Dorsolateral prefrontal cortex (tissue), 120 donors: ENCODE measurements at regions of chr19 and their contacts with region 1.

Region 1: GRCh38 chr19:34733826-34734600 is at the start of gene ZNF181:
- DNase-seq: peak; percentile 82 to 93 (median 90)
- H3K4me3 ChIP-seq: peak within 1 kb of the TSS; percentile 71 to 100 (median 96)
- H3K27ac ChIP-seq: peak within 1 kb of the TSS; percentile 93 to 99 (median 98)
- H3K27me3 ChIP-seq: no peaks in the 10 kb centered on the region
- CTCF ChIP-seq: peak in 30 of 56 donors; percentile 5 to 65 (median 34)
- total RNA-seq, gene ZNF181: 10.3 to 29.8 (median 19.8) TPM

Region 2: DNA sequence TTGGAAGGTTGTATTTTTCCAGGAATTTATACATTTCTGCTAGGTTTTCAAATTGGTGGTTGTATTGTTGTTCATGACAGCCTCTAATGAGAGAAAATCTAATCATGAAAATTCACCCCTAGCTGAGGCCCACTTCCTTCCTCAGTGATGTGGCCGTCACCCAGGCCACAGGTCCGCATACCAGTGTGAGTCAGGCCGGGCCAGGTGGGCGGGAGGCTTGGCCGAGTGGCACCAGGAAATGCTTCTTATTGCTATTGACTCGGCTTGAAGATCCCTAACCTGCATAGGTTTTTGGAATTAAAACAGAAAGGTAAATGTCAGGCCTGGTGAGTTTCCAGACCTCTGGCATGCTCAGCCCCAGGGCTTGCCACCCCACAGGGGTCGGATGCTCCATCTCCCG is 145.8 kb before region 1 on chr19:
- intact Hi-C with region 1: no loop called
- DNase-seq: no peak
- H3K4me3 ChIP-seq: no peak overlapping the region
- H3K27ac ChIP-seq: no peak overlapping the region
- H3K27me3 ChIP-seq: no peaks in the 10 kb centered on the region
- CTCF ChIP-seq: no peak

Region 3: GRCh38 chr19:34639491-34640085 is 94.4 kb before region 1 on chr19:
- intact Hi-C with region 1: loop called in 1 of 2 experiments (anchors 5 kb)
- DNase-seq: peak in 4 of 10 donors; percentile 38 to 66 (median 46)
- H3K4me3 ChIP-seq: no peak overlapping the region
- H3K27ac ChIP-seq: no peak overlapping the region
- H3K27me3 ChIP-seq: no peaks in the 10 kb centered on the region
- CTCF ChIP-seq: peak; percentile 64 to 95 (median 79)

Region 4: DNA sequence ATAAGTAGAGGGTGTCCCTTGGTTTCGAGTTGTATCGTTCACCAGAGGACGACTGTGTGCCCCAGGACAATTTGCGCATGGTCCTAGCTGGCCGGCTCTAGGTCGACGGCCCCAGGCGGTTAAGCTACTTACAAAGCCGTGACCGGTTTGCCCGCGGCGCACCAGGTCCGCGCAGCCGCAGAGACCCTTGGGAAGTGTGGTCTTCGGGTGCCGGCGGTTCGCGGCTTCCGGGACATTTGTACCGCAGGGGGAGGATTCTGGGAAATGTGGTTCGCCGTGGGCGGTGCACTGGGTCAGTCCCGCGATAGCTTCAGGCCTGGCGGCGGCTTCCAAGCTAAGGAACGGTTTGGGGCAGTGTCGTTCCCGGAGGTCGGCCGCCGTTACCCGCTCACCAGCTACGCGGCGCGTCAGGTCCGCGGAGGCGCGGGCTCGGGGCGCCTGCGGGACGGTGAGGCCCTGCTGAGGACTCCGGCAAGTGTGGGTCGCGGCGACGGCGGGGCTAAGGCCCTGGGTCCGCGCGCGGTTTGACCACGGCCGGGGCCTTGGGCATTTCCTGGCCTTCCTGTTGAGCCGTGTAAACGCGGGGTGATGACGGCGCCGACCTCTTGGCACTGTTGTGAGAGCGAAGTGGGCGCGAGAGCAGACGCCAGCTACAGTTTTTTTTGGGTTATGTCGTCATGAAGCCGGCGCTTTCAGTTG is 56.5 kb before region 1 on chr19 and contains the start of gene ZNF302:
- intact Hi-C with region 1: loop called (anchors 1 kb)
- DNase-seq: peak; percentile 94 to 97 (median 96)
- H3K4me3 ChIP-seq: peak within 1 kb of the TSS; percentile 74 to 99 (median 92)
- H3K27ac ChIP-seq: peak within 1 kb of the TSS; percentile 35 to 100 (median 97)
- H3K27me3 ChIP-seq: no peaks in the 10 kb centered on the region
- CTCF ChIP-seq: peak in 19 of 56 donors; percentile 2 to 57 (median 29)
- total RNA-seq, gene ZNF302: 42.2 to 67.0 (median 53.7) TPM

Region 5: DNA sequence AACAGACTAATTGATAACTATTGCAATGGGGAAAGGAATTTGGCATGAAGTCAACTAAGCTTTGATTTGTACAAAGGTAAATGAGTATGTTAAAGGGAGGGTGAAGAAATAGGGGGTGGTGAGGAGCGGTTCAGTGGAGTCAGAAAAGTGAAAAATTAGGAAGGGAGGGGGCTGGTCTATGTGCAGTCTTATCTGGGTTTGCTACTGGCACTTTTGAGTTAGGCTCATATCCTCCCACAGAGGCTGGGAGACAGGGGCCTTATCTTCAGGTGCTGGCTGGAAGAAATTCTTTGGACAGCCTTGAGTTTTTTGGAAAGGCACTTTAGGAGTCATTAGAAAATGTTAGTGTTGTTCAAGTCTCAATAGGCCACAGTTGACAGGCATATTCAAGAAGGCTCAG is 45.4 kb before region 1 on chr19:
- intact Hi-C with region 1: no loop called
- DNase-seq: no peak
- H3K4me3 ChIP-seq: no peak overlapping the region
- H3K27ac ChIP-seq: no peak overlapping the region
- H3K27me3 ChIP-seq: no peaks in the 10 kb centered on the region
- CTCF ChIP-seq: no peak

Region 6: DNA sequence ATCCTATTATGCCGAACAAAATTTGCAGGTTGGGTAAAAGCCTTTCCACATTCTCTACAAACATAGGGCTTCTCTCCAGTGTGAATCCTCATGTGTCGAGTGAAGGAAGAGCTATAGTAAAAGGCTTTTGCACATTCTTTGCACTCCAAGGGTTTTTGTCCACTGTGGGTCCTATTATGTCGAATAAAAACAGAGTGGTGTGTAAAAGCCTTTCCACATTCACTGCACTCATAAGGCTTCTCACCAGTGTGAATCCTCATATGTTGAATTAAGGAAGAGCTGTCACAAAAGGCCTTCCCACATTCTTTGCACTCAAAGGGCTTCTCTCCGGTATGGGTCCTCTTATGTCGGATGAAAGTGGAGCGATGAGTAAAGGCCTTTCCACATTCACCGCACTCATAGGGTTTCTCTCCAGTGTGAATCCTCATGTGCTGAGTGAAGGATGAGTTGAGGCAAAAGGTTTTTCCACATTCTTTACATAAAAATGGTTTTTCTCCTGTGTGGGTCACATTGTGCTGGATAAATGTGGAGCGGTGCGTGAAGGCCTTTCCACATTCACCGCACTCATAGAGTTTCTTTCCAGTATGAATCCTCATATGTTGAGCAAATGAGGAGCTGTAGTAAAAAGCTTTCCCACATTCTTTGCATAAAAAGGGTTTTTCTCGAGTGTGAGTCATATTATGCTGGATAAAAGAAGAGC is 25.4 kb after region 1 on chr19:
- intact Hi-C with region 1: no loop called
- DNase-seq: no peak
- H3K4me3 ChIP-seq: no peak overlapping the region
- H3K27ac ChIP-seq: no peak overlapping the region
- H3K27me3 ChIP-seq: no peaks in the 10 kb centered on the region
- CTCF ChIP-seq: no peak

Region 7: DNA sequence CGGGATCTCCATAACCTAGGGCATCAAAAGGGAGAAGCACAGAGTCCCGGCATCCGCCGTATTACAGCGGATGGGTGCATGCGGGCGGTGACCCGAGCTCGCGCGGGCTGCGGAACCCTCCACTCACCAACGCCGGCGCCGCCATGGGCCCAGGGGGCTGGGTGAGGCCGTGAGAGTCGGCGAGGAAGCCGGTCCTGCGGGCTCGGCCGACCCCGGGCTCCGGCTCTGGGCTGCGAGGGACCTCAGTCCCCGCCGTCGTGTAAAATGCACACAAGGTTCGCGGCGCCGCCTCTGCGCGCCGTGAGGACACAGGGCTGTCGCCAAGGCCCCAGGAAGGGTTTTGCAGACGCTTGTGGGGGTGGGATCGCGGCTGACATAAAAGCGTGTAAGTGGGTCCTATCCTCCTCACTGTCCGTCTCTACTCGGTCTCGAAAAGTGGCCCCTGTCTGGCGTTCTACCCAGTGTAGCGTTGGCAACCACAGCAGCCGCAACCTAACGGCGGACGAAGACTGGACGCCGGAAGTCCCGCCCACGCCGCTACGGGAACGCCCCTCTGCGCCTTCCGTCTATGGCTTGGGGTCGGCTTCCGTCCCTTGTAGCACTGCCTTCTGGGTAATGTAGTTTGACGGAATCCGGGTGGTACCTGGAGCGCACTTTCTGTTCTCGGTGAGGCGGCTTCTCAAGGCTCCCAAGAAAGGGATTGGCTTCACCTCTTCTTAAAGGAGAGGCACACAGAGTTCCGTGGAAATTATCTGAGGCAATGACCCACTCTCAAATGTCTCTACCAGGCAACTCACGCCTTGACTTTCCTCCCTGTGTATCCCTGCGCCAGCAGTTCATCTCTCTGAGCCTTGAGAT is 38.9 kb after region 1 on chr19 and contains the start of gene ZNF599:
- intact Hi-C with region 1: loop called (anchors 1 to 5 kb)
- DNase-seq: peak; percentile 77 to 94 (median 82)
- H3K4me3 ChIP-seq: peak within 1 kb of the TSS; percentile 62 to 97 (median 86)
- H3K27ac ChIP-seq: peak within 1 kb of the TSS in 40 of 59 donors; percentile 15 to 84 (median 61)
- H3K27me3 ChIP-seq: peaks cover 0 to 16% (median 0%) of the 10 kb centered on the region in 45 donors
- CTCF ChIP-seq: peak in 26 of 56 donors; percentile 12 to 62 (median 28)
- total RNA-seq, gene ZNF599: 2.2 to 10.1 (median 5.5) TPM

Region 8: DNA sequence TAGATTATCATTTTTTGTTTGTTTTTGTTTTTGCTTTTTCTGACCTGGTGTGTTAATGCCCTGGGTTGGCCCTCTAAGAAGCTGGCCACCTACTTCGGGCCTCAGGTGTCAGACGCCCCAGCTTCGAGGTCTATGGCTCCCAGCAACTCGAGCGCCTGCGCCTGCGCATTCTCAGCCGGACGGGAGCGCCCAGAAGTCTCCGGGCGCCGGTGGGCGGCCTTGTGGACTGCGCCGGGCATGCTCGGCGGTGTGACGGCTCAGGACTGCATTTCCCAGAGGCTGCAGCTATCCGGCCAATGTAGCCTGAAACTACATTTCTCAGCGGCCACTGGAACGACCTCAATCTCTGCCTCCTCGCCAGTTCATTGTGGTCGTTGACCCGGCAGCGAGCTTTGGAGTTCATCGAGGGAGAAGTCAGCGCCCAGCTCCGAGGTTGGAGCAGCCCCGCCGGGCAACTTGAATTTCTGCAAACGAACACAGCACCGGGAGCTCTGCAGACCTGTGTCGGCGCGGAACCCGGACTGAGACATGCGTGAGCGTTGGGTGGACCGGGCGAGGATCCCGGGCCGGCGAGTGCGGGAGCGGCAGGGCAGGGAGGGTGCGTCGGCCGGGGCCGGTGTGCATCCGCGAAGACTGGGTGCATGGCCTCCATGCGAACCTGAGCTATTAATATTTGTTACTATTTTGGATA is 192.8 kb after region 1 on chr19 and contains the start of gene ZNF30:
- intact Hi-C with region 1: loop called in 1 of 2 experiments (anchors 5 kb)
- DNase-seq: peak; percentile 85 to 94 (median 92)
- H3K4me3 ChIP-seq: peak within 1 kb of the TSS; percentile 55 to 94 (median 78)
- H3K27ac ChIP-seq: peak within 1 kb of the TSS in 54 of 59 donors; percentile 43 to 90 (median 74)
- H3K27me3 ChIP-seq: no peaks in the 10 kb centered on the region
- CTCF ChIP-seq: peak in 43 of 56 donors; percentile 2 to 57 (median 30)
- total RNA-seq, gene ZNF30: 4.8 to 17.3 (median 8.4) TPM

Region 9: DNA sequence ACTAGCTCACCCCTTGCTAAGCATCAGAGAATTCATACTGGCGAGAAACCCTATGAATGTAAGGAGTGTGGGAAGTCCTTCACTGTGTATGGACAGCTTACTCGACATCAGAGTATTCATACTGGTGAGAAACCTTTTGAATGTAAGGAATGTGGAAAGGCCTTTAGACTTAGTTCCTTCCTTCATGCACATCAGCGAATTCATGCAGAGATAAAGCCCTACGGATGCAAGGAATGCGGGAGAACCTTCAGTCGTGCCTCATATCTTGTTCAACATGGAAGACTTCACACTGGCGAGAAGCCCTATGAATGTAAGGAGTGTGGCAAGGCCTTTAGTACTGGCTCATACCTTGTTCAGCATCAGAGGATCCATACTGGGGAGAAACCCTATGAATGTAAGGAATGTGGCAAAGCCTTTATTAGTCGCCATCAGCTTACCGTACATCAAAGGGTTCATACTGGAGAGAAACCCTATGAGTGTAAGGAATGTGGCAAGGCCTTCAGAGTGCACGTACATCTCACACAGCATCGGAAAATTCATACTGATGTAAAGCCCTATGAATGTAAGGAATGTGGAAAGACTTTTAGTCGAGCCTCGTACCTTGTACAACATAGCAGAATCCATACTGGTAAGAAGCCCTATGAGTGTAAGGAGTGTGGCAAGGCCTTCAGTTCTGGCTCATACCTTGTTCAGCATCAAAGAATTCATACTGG is 210.0 kb after region 1 on chr19:
- intact Hi-C with region 1: no loop called
- DNase-seq: no peak
- H3K4me3 ChIP-seq: no peak overlapping the region
- H3K27ac ChIP-seq: no peak overlapping the region
- H3K27me3 ChIP-seq: no peaks in the 10 kb centered on the region
- CTCF ChIP-seq: no peak